ENCODE measurements at regions of chr5 and their contacts with region 1.

Region 1: DNA sequence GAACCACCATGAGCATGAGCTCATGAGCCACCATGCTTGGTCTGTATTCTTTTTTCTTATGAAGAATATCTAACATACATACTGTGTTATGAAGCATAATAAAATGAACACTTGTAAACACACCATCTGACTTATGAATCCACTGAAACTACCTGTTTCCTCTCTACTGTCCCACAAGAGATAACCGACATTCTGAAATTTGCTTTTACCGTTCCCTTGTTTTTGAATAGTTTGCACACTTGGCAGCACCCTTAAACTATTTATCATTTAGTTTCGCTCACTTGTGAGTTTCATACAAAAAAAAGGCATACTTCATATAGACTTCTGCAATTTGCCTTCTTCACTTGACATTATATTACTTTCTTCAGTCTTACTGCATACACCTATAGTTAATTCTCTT is 8.9 kb downstream of the LARS1 start:
- ATAC-seq: no peak
- H3K4me3 ChIP-seq: no peak overlapping the region
- H3K27ac ChIP-seq: no peak overlapping the region
- H3K4me1 ChIP-seq: no peaks in the 10 kb centered on the region

Region 2: DNA sequence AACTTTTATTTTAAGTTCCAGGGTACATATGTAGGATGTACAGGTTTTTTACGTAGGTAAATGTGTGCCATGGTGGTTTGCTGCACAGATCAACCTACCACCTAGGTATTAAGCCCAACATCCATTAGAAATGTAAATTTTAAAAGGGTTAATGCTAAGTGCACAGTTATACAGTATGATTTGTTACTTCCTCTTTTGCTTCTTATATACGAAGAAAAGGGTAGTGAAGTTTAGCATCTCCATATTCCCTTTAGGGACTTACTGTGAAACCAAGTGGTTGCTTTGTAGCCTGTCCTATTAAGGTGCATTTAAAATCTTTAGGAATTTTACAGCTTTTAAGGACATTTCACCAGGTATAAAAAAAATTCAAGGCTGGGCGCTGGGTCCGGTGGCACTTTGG is 76.2 kb after region 1 on chr5:
- in situ Hi-C with region 1: loop called in 1 of 9 experiments (anchors 25 kb)
- ATAC-seq: no peak
- H3K4me3 ChIP-seq: no peak overlapping the region
- H3K27ac ChIP-seq: no peak overlapping the region
- H3K4me1 ChIP-seq: no peaks in the 10 kb centered on the region

Measured in motor neuron (in vitro differentiated cells).